Endothelial cell of umbilical vein (primary cell): ENCODE measurements at regions of chr6 and their contacts with region 1.

Region 1: GRCh38 chr6:74249658-74250057 is 553.7 kb downstream of the CD109 start:
- DNase-seq: peak; percentile 37
- H3K4me3 ChIP-seq: no peak overlapping the region
- H3K27ac ChIP-seq: peak overlapping the region; percentile 69
- H3K4me1 ChIP-seq: peaks cover 25% of the 10 kb centered on the region
- H3K27me3 ChIP-seq: no peaks in the 10 kb centered on the region
- CTCF ChIP-seq: no peak
- POLR2A ChIP-seq: no peak

Region 2: GRCh38 chr6:74182992-74183391 is 66.7 kb before region 1 on chr6:
- CTCF ChIA-PET with region 1: no interaction called
- POLR2A ChIA-PET with region 1: no interaction called
- dilution Hi-C with region 1: no loop called
- intact Hi-C with region 1: no loop called
- DNase-seq: no peak
- H3K4me3 ChIP-seq: no peak overlapping the region
- H3K27ac ChIP-seq: no peak overlapping the region
- H3K4me1 ChIP-seq: no peaks in the 10 kb centered on the region
- H3K27me3 ChIP-seq: peaks cover 0 to 2% of the 10 kb centered on the region in 2 experiments
- CTCF ChIP-seq: no peak
- POLR2A ChIP-seq: no peak

Region 3: GRCh38 chr6:74289884-74290283 is 40.2 kb after region 1 on chr6:
- CTCF ChIA-PET with region 1: no interaction called
- POLR2A ChIA-PET with region 1: no interaction called
- dilution Hi-C with region 1: no loop called
- intact Hi-C with region 1: no loop called
- DNase-seq: no peak
- H3K4me3 ChIP-seq: no peak overlapping the region
- H3K27ac ChIP-seq: no peak overlapping the region
- H3K4me1 ChIP-seq: no peaks in the 10 kb centered on the region
- H3K27me3 ChIP-seq: no peaks in the 10 kb centered on the region
- CTCF ChIP-seq: no peak
- POLR2A ChIP-seq: no peak

Region 4: DNA sequence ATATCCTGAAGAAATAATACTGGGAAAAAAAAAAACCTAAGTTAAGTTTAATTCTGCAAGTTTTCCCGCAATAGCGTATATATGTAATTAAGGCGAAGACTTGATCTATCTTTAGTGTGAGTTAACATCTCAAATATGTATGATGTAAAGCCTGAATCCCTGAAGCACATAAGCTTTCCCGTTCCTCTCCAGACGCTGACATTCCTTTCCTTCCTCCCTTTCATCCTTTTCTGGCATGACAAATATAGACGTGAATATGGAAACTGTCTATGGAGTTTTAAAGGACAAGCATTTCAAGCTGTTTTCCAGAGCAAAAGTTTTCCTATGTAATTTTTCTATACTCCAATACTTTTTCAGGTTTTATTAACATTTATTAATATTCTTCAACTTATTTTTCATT is 319.2 kb after region 1 on chr6:
- CTCF ChIA-PET with region 1: no interaction called
- POLR2A ChIA-PET with region 1: no interaction called
- dilution Hi-C with region 1: no loop called
- intact Hi-C with region 1: loop called (anchors 10 kb)
- DNase-seq: peak; percentile 87
- H3K4me3 ChIP-seq: peak overlapping the region in 1 of 3 experiments; percentile 21
- H3K27ac ChIP-seq: peak overlapping the region; percentile 88
- H3K4me1 ChIP-seq: peaks cover 21% of the 10 kb centered on the region
- H3K27me3 ChIP-seq: no peaks in the 10 kb centered on the region
- CTCF ChIP-seq: no peak
- POLR2A ChIP-seq: no peak